IMR-90 (cell line): ENCODE measurements at regions of chr1 and their contacts with region 1.

Region 1: GRCh38 chr1:183075861-183076260 is 52.6 kb downstream of the LAMC1 start:
- DNase-seq: no peak
- ATAC-seq: no peak
- H3K4me3 ChIP-seq: no peak overlapping the region
- H3K27ac ChIP-seq: no peak overlapping the region
- H3K4me1 ChIP-seq: peaks cover 23% of the 10 kb centered on the region
- H3K27me3 ChIP-seq: no peaks in the 10 kb centered on the region
- CTCF ChIP-seq: no peak
- POLR2A ChIP-seq: no peak
- RAD21 ChIP-seq: no peak

Region 2: GRCh38 chr1:182839209-182840065 is 236.4 kb before region 1 on chr1 and contains the start of gene DHX9:
- CTCF ChIA-PET with region 1: no interaction called
- POLR2A ChIA-PET with region 1: no interaction called
- dilution Hi-C with region 1: no loop called
- in situ Hi-C with region 1: no loop called
- intact Hi-C with region 1: no loop called
- DNase-seq: peak; percentile 85
- ATAC-seq: peak; percentile 89
- H3K4me3 ChIP-seq: peak within 1 kb of the TSS; percentile 75
- H3K27ac ChIP-seq: peak within 1 kb of the TSS; percentile 94
- H3K4me1 ChIP-seq: peaks cover 2% of the 10 kb centered on the region; the same call in 1 of the 2 replicates
- H3K27me3 ChIP-seq: no peaks in the 10 kb centered on the region
- CTCF ChIP-seq: peak; percentile 26; the same call in 1 of the 2 replicates
- POLR2A ChIP-seq: peak; percentile 97
- RAD21 ChIP-seq: no peak
- total RNA-seq, gene DHX9: 211 and 234 TPM in 2 replicates

Region 3: DNA sequence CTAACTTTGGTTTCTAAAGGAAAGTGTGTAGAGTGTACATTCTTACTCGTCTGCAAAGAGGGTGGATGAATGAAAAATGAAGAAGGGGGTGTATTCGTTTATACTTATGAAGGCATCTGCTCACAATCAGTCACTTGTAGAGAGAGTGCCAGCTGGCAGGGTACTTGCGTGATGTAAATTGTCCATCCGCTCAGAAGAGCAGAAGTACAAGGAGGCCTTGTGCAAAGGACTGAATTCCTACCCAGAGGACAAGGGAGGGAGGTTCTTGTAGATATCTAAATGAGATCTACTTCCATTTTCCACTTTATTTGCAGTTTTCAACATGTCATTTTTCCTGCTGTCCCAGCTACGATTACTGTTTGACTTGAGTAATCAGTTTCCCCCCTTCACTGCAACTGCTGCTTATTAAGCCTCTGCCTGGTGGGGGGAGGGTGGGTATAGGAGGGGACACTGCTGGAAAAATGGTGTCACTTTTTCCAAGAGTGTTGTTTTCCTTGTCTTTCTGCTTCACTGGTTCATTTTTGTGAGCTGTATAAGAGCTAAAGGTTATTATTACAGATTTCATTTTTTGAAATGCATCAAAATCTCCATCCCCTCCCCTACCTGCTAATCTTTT is 14.6 kb after region 1 on chr1:
- CTCF ChIA-PET with region 1: no interaction called
- POLR2A ChIA-PET with region 1: no interaction called
- dilution Hi-C with region 1: no loop called
- in situ Hi-C with region 1: no loop called
- intact Hi-C with region 1: loop called (anchors 1 kb)
- DNase-seq: peak; percentile 82
- ATAC-seq: peak; percentile 46
- H3K4me3 ChIP-seq: no peak overlapping the region
- H3K27ac ChIP-seq: peak overlapping the region; percentile 68; the same call in 1 of the 2 replicates
- H3K4me1 ChIP-seq: peaks cover 20% of the 10 kb centered on the region
- H3K27me3 ChIP-seq: no peaks in the 10 kb centered on the region
- CTCF ChIP-seq: no peak
- POLR2A ChIP-seq: no peak
- RAD21 ChIP-seq: no peak

Region 4: GRCh38 chr1:183739741-183740271 is 663.9 kb after region 1 on chr1:
- CTCF ChIA-PET with region 1: no interaction called
- POLR2A ChIA-PET with region 1: no interaction called
- dilution Hi-C with region 1: no loop called
- in situ Hi-C with region 1: no loop called
- intact Hi-C with region 1: no loop called
- DNase-seq: peak; percentile 36
- ATAC-seq: peak; percentile 24; the same call in 1 of the 2 replicates
- H3K4me3 ChIP-seq: no peak overlapping the region
- H3K27ac ChIP-seq: no peak overlapping the region
- H3K4me1 ChIP-seq: peaks cover 8% of the 10 kb centered on the region
- H3K27me3 ChIP-seq: no peaks in the 10 kb centered on the region
- CTCF ChIP-seq: no peak
- POLR2A ChIP-seq: no peak
- RAD21 ChIP-seq: no peak